ENCODE measurements at regions of chr17 and their contacts with region 1.

Region 1: GRCh38 chr17:4565209-4566141 is 5.1 kb upstream of the GGT6 start:
- DNase-seq: peak; percentile 68
- ATAC-seq: peak; percentile 76
- H3K4me3 Mint-ChIP-seq: no peak overlapping the region
- H3K27ac Mint-ChIP-seq: peak overlapping the region; percentile 54; the same call in 1 of the 2 replicates
- H3K4me1 Mint-ChIP-seq: peaks cover 34% of the 10 kb centered on the region
- H3K27me3 Mint-ChIP-seq: peaks cover 7% of the 10 kb centered on the region
- CTCF ChIP-seq: peak; percentile 55

Region 2: DNA sequence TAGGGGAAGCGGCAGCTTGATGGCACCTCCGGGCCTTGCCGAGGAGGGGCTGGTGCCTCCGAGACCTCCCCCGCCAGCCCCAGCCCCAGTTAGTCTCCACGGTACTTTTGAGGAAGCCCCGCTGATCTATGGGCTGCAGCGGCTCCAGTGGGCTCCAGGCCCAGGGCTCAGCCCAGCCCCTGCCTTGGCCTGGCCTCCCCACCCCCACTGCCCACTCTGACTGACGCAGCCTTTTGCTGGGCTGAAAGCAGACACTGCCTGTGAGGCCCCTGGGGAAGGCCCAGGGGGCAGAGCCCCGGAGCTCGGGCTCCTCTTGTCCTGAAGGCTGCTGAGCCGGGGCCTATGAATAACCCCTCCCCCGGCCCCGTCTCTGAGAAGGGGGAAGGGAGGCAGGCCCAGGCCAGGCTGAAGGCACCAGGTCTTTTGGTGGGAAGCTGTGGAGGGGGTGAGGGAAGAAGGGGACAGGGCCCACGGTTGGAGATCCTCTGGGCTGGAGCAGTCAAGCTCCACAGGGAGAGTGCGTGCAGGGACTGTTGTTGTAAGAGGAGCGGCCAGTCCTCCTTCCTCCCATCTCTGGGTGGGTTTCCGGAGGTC is 11.4 kb after region 1 on chr17:
- CTCF ChIA-PET with region 1: interaction called, 38 read pairs
- POLR2A ChIA-PET with region 1: interaction called, 3 read pairs
- DNase-seq: peak; percentile 60
- ATAC-seq: peak; percentile 90
- H3K4me3 Mint-ChIP-seq: no peak overlapping the region
- H3K27ac Mint-ChIP-seq: no peak overlapping the region
- H3K4me1 Mint-ChIP-seq: peaks cover 25% of the 10 kb centered on the region
- H3K27me3 Mint-ChIP-seq: no peaks in the 10 kb centered on the region; the same call in none of the 2 replicates
- CTCF ChIP-seq: no peak

Region 3: DNA sequence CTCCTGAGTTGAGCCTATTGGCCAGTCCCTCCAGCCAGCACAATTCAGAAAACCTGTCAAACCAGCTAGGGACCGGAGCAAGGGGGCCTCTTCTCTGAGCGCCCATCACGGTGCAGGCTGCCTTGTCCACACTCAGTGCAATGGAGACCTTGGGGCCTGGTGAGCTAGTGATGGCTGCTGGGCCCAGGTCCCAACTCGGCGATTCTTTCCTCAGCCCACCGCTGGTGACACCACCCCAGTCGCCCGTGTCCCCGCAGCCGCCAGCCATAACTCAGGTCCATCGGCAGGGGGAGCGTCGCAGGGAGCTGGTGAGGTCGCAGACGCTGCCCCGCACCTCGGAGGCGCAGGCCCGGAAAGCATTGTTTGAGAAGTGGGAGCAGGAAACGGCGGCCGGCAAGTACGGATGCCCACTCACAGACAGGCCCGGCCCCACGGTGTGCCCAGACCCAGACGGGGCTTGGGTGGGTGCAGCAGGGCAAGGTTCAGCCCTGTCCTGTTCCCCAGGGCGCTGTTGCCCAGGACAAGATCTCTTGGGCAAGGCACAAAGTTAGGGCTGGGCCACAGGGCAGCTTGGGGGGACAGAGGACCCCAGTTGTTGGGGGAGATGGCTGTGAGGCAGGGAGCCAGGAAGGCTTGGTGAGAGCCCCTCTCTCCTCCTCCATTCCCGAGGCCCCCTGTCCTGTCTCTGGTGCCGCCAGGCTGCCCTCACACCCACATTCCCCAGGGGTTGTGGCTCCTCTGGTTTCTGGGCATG is 29.6 kb after region 1 on chr17:
- CTCF ChIA-PET with region 1: interaction called, 28 read pairs
- POLR2A ChIA-PET with region 1: no interaction called
- DNase-seq: peak; percentile 76
- ATAC-seq: peak; percentile 75
- H3K4me3 Mint-ChIP-seq: no peak overlapping the region
- H3K27ac Mint-ChIP-seq: no peak overlapping the region
- H3K4me1 Mint-ChIP-seq: peaks cover 25% of the 10 kb centered on the region
- H3K27me3 Mint-ChIP-seq: no peaks in the 10 kb centered on the region
- CTCF ChIP-seq: peak; percentile 55

Region 4: DNA sequence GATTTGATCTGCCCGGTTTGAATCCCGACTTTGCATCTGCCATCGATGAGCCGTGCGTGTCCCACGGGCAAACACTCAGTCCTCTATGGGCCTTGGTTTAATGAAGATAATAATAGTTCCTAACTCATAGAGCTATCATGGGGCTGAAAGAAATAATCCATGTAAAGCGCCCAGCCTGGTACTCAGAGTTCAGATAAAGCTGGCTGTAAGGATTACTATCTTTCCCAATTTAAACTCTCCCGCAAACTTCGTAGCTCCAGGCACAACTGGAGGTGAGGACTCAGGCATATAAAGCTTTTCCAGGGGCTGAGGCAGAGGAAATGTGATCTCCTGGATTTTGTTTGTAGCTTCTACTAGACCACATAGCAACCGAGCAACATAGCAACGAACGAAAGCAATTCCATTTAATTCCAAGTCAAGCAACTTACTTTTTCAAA is 59.7 kb after region 1 on chr17:
- CTCF ChIA-PET with region 1: interaction called, 86 read pairs
- POLR2A ChIA-PET with region 1: interaction called, 3 read pairs
- DNase-seq: no peak
- ATAC-seq: peak; percentile 38; the same call in 1 of the 2 replicates
- H3K4me3 Mint-ChIP-seq: no peak overlapping the region
- H3K27ac Mint-ChIP-seq: no peak overlapping the region
- H3K4me1 Mint-ChIP-seq: peaks cover 8% of the 10 kb centered on the region
- H3K27me3 Mint-ChIP-seq: no peaks in the 10 kb centered on the region
- CTCF ChIP-seq: no peak